H1 (cell line): ENCODE measurements at regions of chr1 and their contacts with region 1.

Region 1: DNA sequence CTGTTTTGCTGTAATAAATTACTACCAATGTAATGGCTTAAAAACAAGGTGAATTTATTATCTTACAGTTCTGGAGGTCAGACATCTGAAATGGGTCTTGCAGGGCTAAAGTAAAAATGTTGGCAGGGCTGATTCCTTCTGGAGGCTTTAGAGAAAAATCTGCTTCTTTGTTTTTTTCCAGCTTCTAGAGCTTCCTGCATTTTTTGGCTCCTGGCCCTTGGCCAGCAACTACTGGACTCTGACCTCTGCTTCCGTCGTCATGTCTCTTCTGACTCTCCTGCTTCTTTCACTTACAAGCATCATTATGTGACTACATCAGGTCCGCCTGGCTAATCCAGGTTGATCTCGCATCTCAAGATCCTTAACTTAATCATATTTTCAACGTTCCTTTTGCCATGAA is 350.9 kb downstream of the S1PR1 start:
- DNase-seq: no peak
- H3K4me3 ChIP-seq: no peak overlapping the region
- H3K27ac ChIP-seq: no peak overlapping the region
- H3K4me1 ChIP-seq: no peaks in the 10 kb centered on the region
- H3K27me3 ChIP-seq: no peaks in the 10 kb centered on the region
- CTCF ChIP-seq: no peak
- EP300 ChIP-seq: no peak
- POLR2A ChIP-seq: no peak
- RAD21 ChIP-seq: no peak

Region 2: DNA sequence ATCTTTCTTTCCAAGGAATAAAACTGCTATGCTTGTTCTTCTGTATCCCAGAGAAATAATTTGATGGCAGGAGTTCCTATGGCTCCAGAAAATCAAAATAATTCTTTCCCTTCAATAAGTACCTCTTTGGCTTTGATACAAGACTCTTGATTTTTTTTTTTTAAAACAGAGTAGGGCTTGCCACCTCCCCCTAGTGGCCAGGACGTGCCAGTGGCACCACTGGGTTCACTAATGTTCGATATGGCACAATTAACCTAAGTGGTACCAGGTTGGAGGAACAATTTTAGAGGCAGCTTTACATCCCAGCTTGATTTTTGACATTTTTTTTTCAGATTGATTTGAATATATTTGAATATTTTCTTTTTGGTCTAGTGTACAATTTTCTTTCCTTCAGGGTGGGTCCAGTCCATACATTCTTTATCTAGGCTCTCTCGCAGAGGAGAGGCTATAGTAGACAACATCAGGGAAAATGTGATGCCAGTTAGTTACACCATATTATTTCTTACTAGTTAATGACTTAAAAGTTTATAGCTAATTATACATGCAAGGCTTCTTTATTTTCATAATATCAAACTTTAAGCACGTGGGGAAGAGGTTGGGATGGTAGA is 20.1 kb before region 1 on chr1:
- CTCF ChIA-PET with region 1: interaction called, 10 read pairs
- POLR2A ChIA-PET with region 1: no interaction called
- DNase-seq: peak in 1 of 2 experiments; percentile 50
- H3K4me3 ChIP-seq: no peak overlapping the region
- H3K27ac ChIP-seq: no peak overlapping the region
- H3K4me1 ChIP-seq: no peaks in the 10 kb centered on the region
- H3K27me3 ChIP-seq: no peaks in the 10 kb centered on the region
- CTCF ChIP-seq: peak; percentile 67 to 85 (median 77)
- EP300 ChIP-seq: no peak
- POLR2A ChIP-seq: no peak
- RAD21 ChIP-seq: peak; percentile 45 to 58